PC-3 (cell line): ENCODE measurements at regions of chr6 and their contacts with region 1.

Region 1: GRCh38 chr6:105608711-105609374 is 206.0 kb upstream of the PREP start:
- DNase-seq: peak; percentile 84
- ATAC-seq: peak; percentile 76
- H3K4me3 ChIP-seq: no peak overlapping the region; the same call in 1 of the 2 replicates
- H3K27ac ChIP-seq: peak overlapping the region; percentile 99
- H3K4me1 ChIP-seq: peaks cover 24% of the 10 kb centered on the region
- H3K27me3 ChIP-seq: no peaks in the 10 kb centered on the region
- CTCF ChIP-seq: no peak

Region 2: DNA sequence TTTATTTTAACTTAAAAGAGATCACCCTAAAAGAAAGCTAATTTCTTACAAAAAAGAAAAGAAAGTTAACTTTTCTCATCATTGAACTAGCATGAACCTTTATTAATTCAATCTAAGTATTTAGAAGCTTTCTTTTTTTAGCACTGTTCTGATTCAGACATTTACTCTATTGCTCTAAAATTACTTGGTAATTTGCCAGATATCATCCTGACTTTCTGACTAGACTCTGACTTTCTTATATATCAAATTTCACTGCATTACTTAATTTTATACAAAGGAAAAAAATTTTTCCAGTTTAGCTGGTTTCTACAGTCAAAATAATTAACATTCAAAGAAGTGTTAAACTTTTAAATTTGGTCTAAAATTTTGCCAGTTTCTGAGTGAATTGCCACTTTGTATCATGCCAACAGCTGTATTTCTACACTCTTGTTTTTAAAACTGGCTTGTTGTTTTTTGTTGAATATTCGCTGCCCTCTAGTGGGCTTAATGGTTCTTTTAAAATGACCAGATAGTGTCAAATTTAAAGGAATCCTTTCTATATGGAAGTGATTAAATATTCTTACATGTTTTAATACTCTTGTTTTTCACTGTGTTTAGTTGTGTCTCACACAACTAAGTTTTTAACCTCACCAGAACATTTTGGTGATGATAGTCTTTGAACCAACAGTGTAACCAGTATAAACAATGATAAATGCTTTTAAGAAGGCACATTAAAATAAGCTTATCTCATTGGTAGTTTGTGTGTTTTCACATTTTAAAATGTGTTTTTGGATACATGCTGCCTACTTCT is 531.1 kb before region 1 on chr6:
- CTCF ChIA-PET with region 1: no interaction called
- POLR2A ChIA-PET with region 1: no interaction called
- intact Hi-C with region 1: no loop called
- DNase-seq: peak; percentile 71
- ATAC-seq: peak; percentile 61
- H3K4me3 ChIP-seq: no peak overlapping the region
- H3K27ac ChIP-seq: no peak overlapping the region; the same call in 1 of the 2 replicates
- H3K4me1 ChIP-seq: peaks cover 20% of the 10 kb centered on the region
- H3K27me3 ChIP-seq: no peaks in the 10 kb centered on the region
- CTCF ChIP-seq: peak; percentile 78

Region 3: GRCh38 chr6:105468850-105469249 is 140.0 kb before region 1 on chr6:
- CTCF ChIA-PET with region 1: no interaction called
- POLR2A ChIA-PET with region 1: interaction called, 15 read pairs
- intact Hi-C with region 1: no loop called
- DNase-seq: no peak
- ATAC-seq: no peak
- H3K4me3 ChIP-seq: no peak overlapping the region
- H3K27ac ChIP-seq: no peak overlapping the region
- H3K4me1 ChIP-seq: no peaks in the 10 kb centered on the region
- H3K27me3 ChIP-seq: no peaks in the 10 kb centered on the region
- CTCF ChIP-seq: no peak